ENCODE measurements at regions of chr19 and their contacts with region 1.

Region 1: DNA sequence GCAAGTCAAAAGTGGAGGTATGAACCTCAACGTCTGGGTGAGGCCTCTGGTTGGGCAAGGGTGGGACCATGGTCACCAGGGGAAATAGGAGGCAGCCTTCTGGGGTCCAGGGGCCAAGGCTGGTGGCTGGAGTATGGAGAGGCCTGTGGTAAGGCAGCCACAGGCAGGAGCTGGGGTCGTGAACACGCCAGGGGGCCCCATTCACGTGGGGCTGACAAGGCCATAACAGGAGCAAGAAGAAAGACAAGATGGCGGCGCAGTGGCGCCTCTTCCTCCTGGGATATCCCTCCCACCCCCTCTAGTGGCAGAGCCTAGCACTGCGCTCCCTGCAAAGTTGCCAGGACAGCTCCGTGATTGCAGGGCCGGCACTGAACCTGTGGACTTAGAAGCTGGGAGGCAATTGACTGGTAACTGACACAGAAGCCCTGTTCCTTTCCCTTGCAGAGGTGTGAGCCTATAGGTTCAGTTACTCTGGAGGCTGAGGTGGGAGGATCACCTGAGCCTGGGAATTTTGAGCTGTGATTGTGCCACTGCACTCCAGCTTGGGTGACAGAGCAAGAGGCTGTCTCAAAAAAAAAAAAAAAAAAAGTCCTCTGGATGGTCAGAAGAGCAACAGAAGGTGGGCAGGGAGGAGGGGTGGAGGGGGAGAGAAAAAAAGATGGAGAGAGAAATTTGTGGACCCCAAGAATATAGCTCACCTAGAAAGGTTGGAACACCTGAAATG is 19.7 kb upstream of the EDDM13 start:
- DNase-seq: peak; percentile 83
- H3K4me3 Mint-ChIP-seq: no peak overlapping the region
- H3K27ac Mint-ChIP-seq: no peak overlapping the region
- H3K4me1 Mint-ChIP-seq: peaks cover 5% of the 10 kb centered on the region
- H3K27me3 Mint-ChIP-seq: no peaks in the 10 kb centered on the region

Region 2: DNA sequence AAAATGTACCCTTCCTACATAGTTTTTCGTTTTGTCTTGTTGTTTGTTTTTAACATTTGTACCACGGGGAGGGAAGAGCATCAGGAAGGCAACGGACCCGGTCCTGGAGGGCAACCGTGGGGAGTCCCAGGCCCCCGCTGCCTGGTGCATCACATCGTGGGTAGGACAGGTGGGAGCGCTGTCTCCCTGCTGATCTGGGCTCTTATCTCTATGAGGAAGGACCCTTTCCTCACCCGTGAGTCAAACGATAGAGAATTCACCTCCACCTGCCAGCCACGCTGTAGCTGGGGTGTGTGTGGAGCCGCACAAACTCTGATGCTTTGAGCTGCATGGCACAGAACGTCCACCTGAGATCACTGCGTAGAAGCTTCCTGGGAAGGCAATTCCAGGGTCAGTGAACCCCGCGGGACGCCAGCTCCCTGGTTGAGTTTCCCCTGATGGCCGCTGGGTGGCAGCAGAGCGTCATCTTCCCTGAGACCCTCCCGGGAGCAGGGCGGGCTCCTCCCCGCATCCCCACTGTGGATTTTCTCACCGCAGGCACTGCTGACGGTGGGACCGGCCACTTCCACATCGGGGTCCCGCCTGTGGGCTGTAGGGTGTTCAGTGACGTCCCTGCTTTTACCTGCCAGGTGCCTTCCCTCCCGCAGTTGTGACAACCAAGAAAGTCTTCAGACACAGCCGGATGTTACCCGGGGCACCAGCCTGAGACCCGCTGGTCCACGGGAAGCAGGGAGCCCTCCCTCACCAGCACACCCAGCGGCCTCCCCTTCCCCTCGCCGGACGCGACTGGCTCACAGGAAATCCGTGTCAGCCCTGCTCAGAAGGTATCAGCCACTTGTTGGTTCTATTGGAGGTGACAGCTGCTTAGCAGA is 186.5 kb before region 1 on chr19:
- CTCF ChIA-PET with region 1: interaction called, 27 read pairs
- POLR2A ChIA-PET with region 1: no interaction called
- intact Hi-C with region 1: no loop called
- DNase-seq: peak; percentile 70
- H3K4me3 Mint-ChIP-seq: peak overlapping the region; percentile 48
- H3K27ac Mint-ChIP-seq: no peak overlapping the region
- H3K4me1 Mint-ChIP-seq: peaks cover 10% of the 10 kb centered on the region
- H3K27me3 Mint-ChIP-seq: peaks cover 28% of the 10 kb centered on the region

Region 3: GRCh38 chr19:56116606-56117005 is 136.3 kb before region 1 on chr19:
- CTCF ChIA-PET with region 1: no interaction called
- POLR2A ChIA-PET with region 1: no interaction called
- intact Hi-C with region 1: no loop called
- DNase-seq: no peak
- H3K4me3 Mint-ChIP-seq: no peak overlapping the region
- H3K27ac Mint-ChIP-seq: no peak overlapping the region
- H3K4me1 Mint-ChIP-seq: peaks cover 52% of the 10 kb centered on the region
- H3K27me3 Mint-ChIP-seq: no peaks in the 10 kb centered on the region

Region 4: GRCh38 chr19:56273563-56274117 is 20.8 kb after region 1 on chr19:
- CTCF ChIA-PET with region 1: interaction called, 17 read pairs
- POLR2A ChIA-PET with region 1: no interaction called
- intact Hi-C with region 1: no loop called
- DNase-seq: no peak
- H3K4me3 Mint-ChIP-seq: no peak overlapping the region
- H3K27ac Mint-ChIP-seq: no peak overlapping the region
- H3K4me1 Mint-ChIP-seq: no peaks in the 10 kb centered on the region
- H3K27me3 Mint-ChIP-seq: no peaks in the 10 kb centered on the region

Region 5: DNA sequence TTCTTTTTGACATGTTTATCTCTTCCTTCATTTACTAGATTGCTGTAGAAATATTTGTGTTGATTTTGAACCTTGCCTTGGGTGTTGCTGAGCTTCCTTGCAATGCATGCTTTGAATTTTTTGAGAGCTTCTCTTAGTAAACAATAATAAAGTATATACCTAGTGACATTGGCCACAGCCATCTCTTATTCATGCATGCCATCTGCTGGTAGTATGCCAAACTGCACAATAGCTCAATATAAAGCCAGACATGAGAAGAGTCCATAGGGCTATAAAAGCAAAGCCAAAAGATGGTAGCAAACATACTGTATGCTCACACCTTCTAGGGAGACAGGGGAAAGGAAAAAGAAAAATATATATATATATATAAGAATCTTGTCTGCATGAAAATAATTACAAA is 80.6 kb after region 1 on chr19:
- CTCF ChIA-PET with region 1: interaction called, 118 read pairs
- POLR2A ChIA-PET with region 1: interaction called, 3 read pairs
- intact Hi-C with region 1: loop called (anchors 1 kb)
- DNase-seq: peak; percentile 34
- H3K4me3 Mint-ChIP-seq: no peak overlapping the region
- H3K27ac Mint-ChIP-seq: no peak overlapping the region
- H3K4me1 Mint-ChIP-seq: no peaks in the 10 kb centered on the region
- H3K27me3 Mint-ChIP-seq: peaks cover 5% of the 10 kb centered on the region

Region 6: DNA sequence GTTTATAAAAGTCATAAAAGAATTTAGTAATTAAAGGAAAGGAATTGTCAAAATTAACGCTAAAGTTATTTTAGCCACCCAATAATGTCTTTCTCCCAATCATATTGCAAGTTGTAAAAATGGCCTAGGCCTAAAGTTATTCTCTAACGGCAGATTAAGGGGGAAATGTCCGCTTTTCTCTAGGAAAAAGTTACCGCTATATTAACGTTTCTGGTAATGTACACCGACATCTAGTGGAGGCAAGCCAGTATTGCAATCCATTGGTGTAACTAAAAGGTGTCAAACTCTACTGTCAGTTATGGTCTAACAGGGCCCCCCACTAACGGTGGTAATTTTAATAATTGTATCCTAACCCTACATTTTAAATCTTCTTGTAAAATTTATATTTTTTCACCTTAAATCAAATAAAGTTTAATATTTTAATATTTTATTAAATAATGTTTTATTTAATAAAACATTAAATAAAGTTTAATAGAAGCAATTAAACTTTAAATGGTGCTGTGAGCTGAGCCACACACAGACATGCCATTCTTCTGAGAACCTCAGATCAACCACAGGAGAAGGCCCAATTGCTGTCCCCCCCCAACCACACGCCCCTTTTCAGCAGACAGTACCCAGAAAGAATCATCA is 97.7 kb after region 1 on chr19:
- CTCF ChIA-PET with region 1: interaction called, 33 read pairs
- POLR2A ChIA-PET with region 1: no interaction called
- intact Hi-C with region 1: loop called (anchors 2 kb)
- DNase-seq: peak; percentile 46
- H3K4me3 Mint-ChIP-seq: no peak overlapping the region
- H3K27ac Mint-ChIP-seq: no peak overlapping the region
- H3K4me1 Mint-ChIP-seq: no peaks in the 10 kb centered on the region
- H3K27me3 Mint-ChIP-seq: no peaks in the 10 kb centered on the region